Dorsolateral prefrontal cortex (tissue), 120 donors: ENCODE measurements at regions of chr3 and their contacts with region 1.

Region 1: GRCh38 chr3:112519424-112520001 is 20.2 kb upstream of the BTLA start:
- DNase-seq: peak in 3 of 10 donors; percentile 4 to 36 (median 4)
- H3K4me3 ChIP-seq: no peak overlapping the region
- H3K27ac ChIP-seq: peak overlapping the region in 2 of 59 donors; percentile 5 to 26
- H3K27me3 ChIP-seq: no peaks in the 10 kb centered on the region
- CTCF ChIP-seq: peak; percentile 69 to 98 (median 89)

Region 2: GRCh38 chr3:112111785-112112402 is 407.6 kb before region 1 on chr3:
- intact Hi-C with region 1: loop called in 1 of 2 experiments (anchors 10 kb)
- DNase-seq: peak in 3 of 10 donors; percentile 15 to 53 (median 24)
- H3K4me3 ChIP-seq: no peak overlapping the region
- H3K27ac ChIP-seq: no peak overlapping the region
- H3K27me3 ChIP-seq: peaks cover 0 to 7% (median 0%) of the 10 kb centered on the region in 45 donors
- CTCF ChIP-seq: peak in 55 of 56 donors; percentile 26 to 77 (median 63)

Region 3: DNA sequence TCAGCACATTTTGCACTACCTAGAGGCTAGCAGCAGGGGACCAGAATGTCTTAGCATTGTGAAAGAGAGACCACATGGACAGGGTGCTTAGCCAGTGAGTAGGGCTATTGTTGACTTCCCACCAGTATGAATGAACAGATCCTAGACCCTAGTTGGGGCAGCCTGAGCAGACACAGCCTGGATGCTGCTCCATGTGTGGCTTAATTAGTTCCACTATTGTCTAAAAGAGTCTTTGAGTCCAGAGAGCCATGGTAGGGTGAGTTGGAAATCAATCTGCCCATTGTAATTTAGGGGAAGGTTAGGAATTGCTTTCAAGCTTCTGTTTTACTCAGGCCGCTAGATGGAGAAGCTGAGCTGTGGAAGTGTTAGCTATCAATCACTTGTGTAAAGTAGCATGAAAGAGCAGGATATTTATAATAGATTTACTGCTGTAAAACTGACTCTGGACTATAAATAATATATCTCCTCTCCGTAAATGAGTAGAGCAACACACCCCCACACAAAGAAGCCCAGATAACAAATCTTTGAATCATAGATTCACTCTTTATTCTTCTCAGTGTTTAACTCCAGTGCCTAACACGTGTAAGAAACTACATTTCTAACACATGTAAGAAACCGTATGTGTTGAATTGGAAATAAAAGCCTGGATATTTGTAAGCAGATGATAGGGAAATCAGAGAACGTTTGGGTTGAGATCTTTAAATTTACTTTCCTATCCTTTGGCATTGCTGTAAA is 382.4 kb before region 1 on chr3:
- intact Hi-C with region 1: loop called (anchors 5 to 10 kb)
- DNase-seq: peak in 3 of 10 donors; percentile 32 to 68 (median 52)
- H3K4me3 ChIP-seq: no peak overlapping the region
- H3K27ac ChIP-seq: no peak overlapping the region
- H3K27me3 ChIP-seq: no peaks in the 10 kb centered on the region
- CTCF ChIP-seq: peak; percentile 38 to 82 (median 66)

Region 4: GRCh38 chr3:112293368-112294321 is 225.9 kb before region 1 on chr3 and contains the start of gene SLC9C1:
- intact Hi-C with region 1: loop called (anchors 10 kb)
- DNase-seq: peak in 2 of 10 donors; percentile 14 to 41
- H3K4me3 ChIP-seq: peak within 1 kb of the TSS; percentile 15 to 71 (median 51)
- H3K27ac ChIP-seq: peak within 1 kb of the TSS in 56 of 59 donors; percentile 4 to 92 (median 68)
- H3K27me3 ChIP-seq: no peaks in the 10 kb centered on the region
- CTCF ChIP-seq: peak; percentile 40 to 88 (median 72)
- total RNA-seq, gene SLC9C1: 0.12 to 1.4 (median 0.27) TPM in 12 of 120 experiments, not detected in the others

Region 5: GRCh38 chr3:112327371-112327951 is 192.1 kb before region 1 on chr3:
- intact Hi-C with region 1: loop called (anchors 2 kb)
- DNase-seq: no peak
- H3K4me3 ChIP-seq: no peak overlapping the region
- H3K27ac ChIP-seq: peak overlapping the region in 1 of 59 donors; percentile 33
- H3K27me3 ChIP-seq: peaks cover 0 to 5% (median 0%) of the 10 kb centered on the region in 45 donors
- CTCF ChIP-seq: peak; percentile 10 to 92 (median 76)

Region 6: GRCh38 chr3:112333002-112333380 is 186.5 kb before region 1 on chr3 and contains the start of gene CD200:
- intact Hi-C with region 1: loop called in 1 of 2 experiments (anchors 2 kb)
- DNase-seq: peak; percentile 53 to 87 (median 74)
- H3K4me3 ChIP-seq: peak within 1 kb of the TSS; percentile 54 to 95 (median 77)
- H3K27ac ChIP-seq: peak within 1 kb of the TSS; percentile 83 to 100 (median 98)
- H3K27me3 ChIP-seq: no peaks in the 10 kb centered on the region
- CTCF ChIP-seq: peak in 13 of 56 donors; percentile 1 to 44 (median 21)
- total RNA-seq, gene CD200: 27.6 to 121 (median 80.1) TPM

Region 7: GRCh38 chr3:112390783-112391641 is 128.5 kb before region 1 on chr3:
- intact Hi-C with region 1: loop called in 1 of 2 experiments (anchors 10 kb)
- DNase-seq: peak in 4 of 10 donors; percentile 8 to 53 (median 40)
- H3K4me3 ChIP-seq: peak overlapping the region in 35 of 59 donors; percentile 1 to 50 (median 22)
- H3K27ac ChIP-seq: peak overlapping the region; percentile 87 to 99 (median 97)
- H3K27me3 ChIP-seq: no peaks in the 10 kb centered on the region
- CTCF ChIP-seq: peak in 10 of 56 donors; percentile 3 to 33 (median 10)

Region 8: DNA sequence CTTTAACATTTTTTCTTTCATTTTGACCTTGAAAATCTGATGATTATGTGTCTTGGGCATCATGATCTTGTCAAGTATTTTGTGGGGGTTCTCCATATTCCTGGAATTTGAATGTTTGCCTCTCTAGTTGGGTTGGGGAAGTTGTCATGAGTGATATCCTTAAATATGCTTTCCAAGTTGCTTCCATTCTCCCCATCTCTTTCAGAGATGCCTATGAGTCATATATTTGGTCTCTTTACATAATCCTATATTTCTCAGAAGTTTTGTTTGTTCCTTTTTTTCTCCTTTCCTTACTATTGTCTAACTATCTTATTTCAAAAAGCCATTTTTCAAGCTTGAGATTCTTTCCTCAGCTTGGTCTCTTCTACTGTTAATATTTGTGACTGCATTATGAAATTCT is 190.4 kb after region 1 on chr3:
- intact Hi-C with region 1: no loop called
- DNase-seq: no peak
- H3K4me3 ChIP-seq: no peak overlapping the region
- H3K27ac ChIP-seq: no peak overlapping the region
- H3K27me3 ChIP-seq: peaks cover 0 to 3% (median 0%) of the 10 kb centered on the region in 45 donors
- CTCF ChIP-seq: no peak